Mammary epithelial cell (primary cell): ENCODE measurements at regions of chr2 and their contacts with region 1.

Region 1: DNA sequence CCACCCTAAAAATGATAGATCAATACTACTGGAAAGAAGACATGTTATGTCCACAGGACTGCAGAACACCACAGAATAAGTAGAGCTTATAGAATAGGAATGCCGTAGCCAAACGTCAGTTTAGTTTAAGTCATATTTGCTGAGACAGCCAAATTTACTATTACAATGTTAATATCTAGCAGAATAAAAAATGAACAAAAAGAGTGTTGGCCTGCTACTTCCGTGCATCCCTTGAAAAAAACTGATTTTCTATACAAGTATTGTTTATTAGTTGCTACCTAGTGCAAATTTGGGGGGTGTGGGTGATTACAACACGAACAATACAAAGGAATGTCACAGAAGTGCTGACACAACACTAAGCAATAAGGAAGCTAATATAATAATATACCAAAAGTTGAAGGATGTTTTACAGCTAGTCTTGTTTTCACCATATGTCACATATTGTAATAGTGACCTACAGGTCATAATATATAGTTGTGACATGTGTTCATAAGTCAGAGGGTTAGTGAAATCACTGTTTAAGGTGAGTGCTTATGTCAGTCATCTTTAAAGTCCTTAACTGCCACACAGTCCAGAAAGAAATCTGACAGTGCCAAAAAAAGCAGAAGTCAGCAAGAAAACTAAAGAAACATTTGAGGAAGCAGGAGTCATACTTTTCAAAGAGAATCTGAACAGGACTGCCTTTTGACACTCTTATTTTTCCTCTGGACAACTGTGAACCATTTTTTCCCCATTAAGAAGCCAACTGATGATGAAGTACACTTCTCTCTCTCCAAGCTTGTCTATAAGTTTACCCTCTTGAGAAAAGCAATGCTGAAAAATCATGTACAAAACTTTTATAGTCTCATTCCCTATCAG is 376.4 kb downstream of the ZEB2 start:
- DNase-seq: no peak
- H3K4me3 ChIP-seq: no peak overlapping the region
- H3K27ac ChIP-seq: no peak overlapping the region
- H3K4me1 ChIP-seq: no peaks in the 10 kb centered on the region
- H3K27me3 ChIP-seq: no peaks in the 10 kb centered on the region
- CTCF ChIP-seq: no peak

Region 2: GRCh38 chr2:143974262-143974661 is 169.3 kb before region 1 on chr2:
- CTCF ChIA-PET with region 1: interaction called, 17 read pairs
- dilution Hi-C with region 1: no loop called
- in situ Hi-C with region 1: no loop called
- intact Hi-C with region 1: no loop called
- DNase-seq: no peak
- H3K4me3 ChIP-seq: no peak overlapping the region
- H3K27ac ChIP-seq: no peak overlapping the region
- H3K4me1 ChIP-seq: no peaks in the 10 kb centered on the region
- H3K27me3 ChIP-seq: no peaks in the 10 kb centered on the region
- CTCF ChIP-seq: no peak